Activated CD4-positive, alpha-beta T cell treated with anti-CD3 and anti-CD28 coated beads, Interleukin-2, amount 10 ng/mL, durations not matched to agents 7 days and 5 days (primary cell): ENCODE measurements at regions of chr10 and their contacts with region 1.

Region 1: DNA sequence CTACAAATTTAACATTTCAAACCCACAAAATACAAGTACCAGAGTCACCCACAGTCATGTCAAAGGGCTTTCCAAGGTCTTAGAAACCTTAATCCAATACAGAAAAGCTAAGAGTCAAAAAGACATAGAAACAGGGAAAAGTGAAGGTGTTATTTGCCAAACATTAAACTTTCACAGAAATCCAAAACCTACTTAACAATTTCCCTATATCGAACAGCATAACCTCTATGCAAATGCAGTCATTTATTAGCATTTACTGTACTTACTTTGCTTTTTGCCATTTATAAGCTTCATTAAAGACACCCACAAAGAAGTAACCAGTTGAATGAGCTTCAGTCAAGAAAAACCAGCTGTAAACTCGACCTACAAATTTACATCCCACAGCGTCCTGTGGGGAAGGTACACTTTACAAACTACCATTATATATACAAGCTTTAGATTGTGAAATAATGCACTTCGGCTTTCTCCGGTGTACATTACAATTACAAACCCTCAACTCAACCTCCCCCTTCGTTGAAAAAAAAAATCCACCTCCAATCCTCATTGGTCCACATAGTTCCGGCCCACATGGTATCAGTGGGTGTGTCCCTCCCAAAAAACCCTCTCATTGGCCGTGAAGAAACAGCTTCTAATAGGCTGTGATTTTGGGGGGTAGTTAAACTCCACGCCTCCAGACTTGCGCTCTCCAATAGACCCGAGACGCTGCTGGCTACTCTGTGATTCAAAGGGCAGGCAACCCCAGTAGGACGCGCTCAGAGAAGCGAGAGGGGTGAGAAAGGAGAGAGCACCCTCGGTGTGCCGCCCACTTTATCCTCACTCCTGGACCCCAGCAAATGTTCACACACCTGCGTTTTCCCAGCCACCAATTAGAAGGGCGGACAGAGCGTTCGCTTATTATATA is 1.4 kb downstream of the PANK1 start:
- DNase-seq: peak; percentile 85
- H3K4me3 Mint-ChIP-seq: no peak overlapping the region
- H3K27ac Mint-ChIP-seq: no peak overlapping the region
- H3K4me1 Mint-ChIP-seq: peaks cover 15% of the 10 kb centered on the region
- H3K27me3 Mint-ChIP-seq: peaks cover 14% of the 10 kb centered on the region

Region 2: GRCh38 chr10:89701238-89702120 is 57.8 kb after region 1 on chr10 and contains the start of gene KIF20B:
- CTCF ChIA-PET with region 1: no interaction called
- POLR2A ChIA-PET with region 1: interaction called, 10 read pairs
- DNase-seq: peak; percentile 97
- H3K4me3 Mint-ChIP-seq: peak within 1 kb of the TSS; percentile 98
- H3K27ac Mint-ChIP-seq: peak within 1 kb of the TSS; percentile 99
- H3K4me1 Mint-ChIP-seq: peaks cover 50% of the 10 kb centered on the region
- H3K27me3 Mint-ChIP-seq: no peaks in the 10 kb centered on the region
- total RNA-seq, gene KIF20B: 66.4 to 85.7 TPM